Panc1 (cell line): ENCODE measurements at regions of chr19 and their contacts with region 1.

Region 1: DNA sequence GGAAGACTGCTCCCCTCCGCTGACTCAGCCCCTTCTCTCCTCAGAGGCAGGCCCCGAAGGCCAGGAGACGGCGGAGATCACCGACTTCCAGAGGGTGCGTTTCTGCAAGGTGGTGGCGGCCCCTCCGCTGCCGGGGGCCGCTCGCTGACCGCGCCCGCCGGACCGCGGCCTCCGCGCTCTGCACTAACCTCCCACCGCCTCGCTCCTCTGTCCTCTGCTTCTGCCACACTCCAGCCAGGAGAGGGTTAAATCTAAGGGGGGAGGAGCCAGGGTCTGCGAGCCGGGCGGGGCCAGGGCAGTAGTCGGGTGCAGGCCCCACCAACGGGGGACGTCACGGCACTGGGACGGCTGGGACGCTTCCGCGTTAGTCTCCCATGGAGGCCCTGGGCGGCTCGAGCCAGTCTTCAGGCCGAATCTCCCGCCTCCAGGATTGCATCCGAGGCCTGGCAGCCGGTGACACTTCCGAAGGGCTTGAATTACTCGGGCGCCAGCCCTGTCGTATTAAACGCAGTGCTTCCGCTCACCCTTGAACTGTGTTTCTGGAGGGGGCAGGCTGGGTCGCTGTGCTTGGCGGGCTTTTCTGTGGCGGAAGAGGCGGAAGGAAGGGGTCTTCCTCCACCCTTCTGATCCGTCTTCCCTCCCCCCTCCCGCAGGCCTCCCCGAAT is 1.2 kb upstream of the INAFM1 start:
- DNase-seq: no peak
- ATAC-seq: peak; percentile 87
- H3K4me3 ChIP-seq: peak overlapping the region; percentile 64 to 65
- H3K27ac ChIP-seq: peak overlapping the region; percentile 91
- H3K4me1 ChIP-seq: peaks cover 9% of the 10 kb centered on the region
- H3K27me3 ChIP-seq: no peaks in the 10 kb centered on the region
- CTCF ChIP-seq: no peak

Region 2: DNA sequence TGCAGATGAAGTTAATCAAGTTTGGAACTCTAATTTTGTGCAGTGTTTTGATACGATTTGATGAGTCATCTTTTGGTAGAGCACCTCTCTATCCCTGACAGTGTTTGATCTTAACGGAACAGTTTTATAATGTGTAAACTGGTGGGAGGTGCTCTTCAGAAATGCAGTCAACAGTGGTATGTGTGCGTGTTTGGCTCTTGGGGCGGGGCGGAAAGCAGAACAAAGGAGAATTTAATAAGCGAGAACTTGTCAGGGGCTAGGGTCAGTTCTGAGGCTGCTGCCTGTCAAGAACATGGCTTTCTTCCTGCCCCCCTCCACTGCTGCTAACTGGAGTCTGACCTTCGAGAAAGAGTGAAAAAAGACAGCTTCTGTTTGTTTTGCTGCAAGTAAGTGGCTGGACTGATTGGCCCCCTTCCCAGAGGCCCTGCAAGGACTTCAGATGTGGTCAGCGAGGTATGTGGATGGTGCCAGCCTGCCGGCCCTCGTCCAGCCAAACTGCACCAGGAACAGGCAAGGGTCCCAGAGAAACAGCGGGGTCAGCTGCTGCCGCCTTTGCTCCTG is 83.2 kb before region 1 on chr19:
- CTCF ChIA-PET with region 1: no interaction called
- POLR2A ChIA-PET with region 1: interaction called, 12 read pairs
- in situ Hi-C with region 1: no loop called
- intact Hi-C with region 1: no loop called
- DNase-seq: no peak
- ATAC-seq: peak; percentile 85
- H3K4me3 ChIP-seq: peak overlapping the region in 1 of 2 experiments; percentile 29; a peak in 2 of 4 replicates
- H3K27ac ChIP-seq: peak overlapping the region; percentile 86
- H3K4me1 ChIP-seq: peaks cover 45% of the 10 kb centered on the region
- H3K27me3 ChIP-seq: no peaks in the 10 kb centered on the region
- CTCF ChIP-seq: no peak

Region 3: GRCh38 chr19:47231215-47231984 is 42.0 kb before region 1 on chr19:
- CTCF ChIA-PET with region 1: no interaction called
- POLR2A ChIA-PET with region 1: no interaction called
- in situ Hi-C with region 1: no loop called
- intact Hi-C with region 1: no loop called
- DNase-seq: no peak
- ATAC-seq: peak; percentile 18
- H3K4me3 ChIP-seq: peak overlapping the region; percentile 59 to 65
- H3K27ac ChIP-seq: peak overlapping the region; percentile 23; the same call in 1 of the 2 replicates
- H3K4me1 ChIP-seq: peaks cover 17% of the 10 kb centered on the region
- H3K27me3 ChIP-seq: no peaks in the 10 kb centered on the region
- CTCF ChIP-seq: no peak

Region 4: GRCh38 chr19:47256688-47257443 is 16.6 kb before region 1 on chr19:
- CTCF ChIA-PET with region 1: no interaction called
- POLR2A ChIA-PET with region 1: interaction called, 29 read pairs
- in situ Hi-C with region 1: no loop called
- intact Hi-C with region 1: no loop called
- DNase-seq: no peak
- ATAC-seq: peak; percentile 87
- H3K4me3 ChIP-seq: peak overlapping the region; percentile 65 to 89; a peak in 3 of 4 replicates
- H3K27ac ChIP-seq: no peak overlapping the region; the same call in 1 of the 2 replicates
- H3K4me1 ChIP-seq: peaks cover 6% of the 10 kb centered on the region
- H3K27me3 ChIP-seq: no peaks in the 10 kb centered on the region
- CTCF ChIP-seq: no peak

Region 5: GRCh38 chr19:47305309-47305751 is 31.9 kb after region 1 on chr19:
- CTCF ChIA-PET with region 1: no interaction called
- POLR2A ChIA-PET with region 1: no interaction called
- in situ Hi-C with region 1: no loop called
- intact Hi-C with region 1: no loop called
- DNase-seq: no peak
- ATAC-seq: peak; percentile 63; the same call in 1 of the 2 replicates
- H3K4me3 ChIP-seq: no peak overlapping the region
- H3K27ac ChIP-seq: no peak overlapping the region
- H3K4me1 ChIP-seq: 0 out of 2 replicates have a peak, but pooled peaks cover 2% of the 10 kb centered on the region
- H3K27me3 ChIP-seq: no peaks in the 10 kb centered on the region
- CTCF ChIP-seq: peak; percentile 96